IMR-90 (cell line): ENCODE measurements at regions of chr12 and their contacts with region 1.

Region 1: DNA sequence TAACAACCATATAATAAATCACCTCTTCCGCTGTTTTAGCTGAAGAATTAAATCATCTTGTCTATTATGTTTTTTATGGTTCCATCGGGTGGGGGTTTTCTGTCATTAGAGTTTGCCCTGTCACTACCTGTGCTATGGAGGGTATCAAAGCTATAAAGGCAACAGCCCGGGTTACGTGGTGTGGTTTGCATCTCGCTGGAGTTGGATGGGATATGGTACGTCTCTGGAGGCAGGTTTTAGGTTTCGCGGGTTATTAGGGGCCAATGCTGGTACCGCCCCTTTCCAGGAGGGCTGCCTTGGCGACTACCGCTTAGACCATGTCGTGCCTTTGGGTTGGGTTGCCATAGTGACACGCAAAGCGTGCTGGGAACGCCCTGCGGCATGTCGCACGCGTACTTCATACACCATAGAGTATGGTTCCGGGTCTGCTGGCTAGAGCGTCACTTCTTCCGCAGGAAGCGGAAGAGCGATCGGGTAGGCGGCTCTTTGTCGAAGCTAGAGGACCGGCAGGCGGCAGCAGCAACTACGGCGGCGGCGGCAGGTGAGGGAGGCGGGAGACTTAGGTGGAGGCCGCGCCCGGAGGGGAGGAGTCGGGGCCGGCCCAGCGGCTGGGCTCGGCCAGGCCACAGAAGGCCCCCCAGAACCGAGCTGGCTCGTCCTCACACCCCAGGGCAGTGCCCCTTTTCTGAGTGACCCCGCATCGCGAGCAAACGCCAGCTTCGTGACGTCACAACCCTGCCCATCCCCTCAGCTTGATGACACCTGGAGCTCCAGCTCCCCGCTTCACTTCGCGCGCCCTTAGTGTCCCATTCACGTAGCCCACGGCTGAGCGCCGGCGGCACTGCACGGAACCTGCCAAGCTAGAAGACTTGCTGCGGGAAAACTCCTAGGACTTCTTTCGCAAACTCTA is at the start of gene ZC3H10:
- DNase-seq: peak; percentile 100
- ATAC-seq: peak; percentile 76
- H3K4me3 ChIP-seq: peak within 1 kb of the TSS; percentile 85
- H3K27ac ChIP-seq: peak within 1 kb of the TSS; percentile 95
- H3K4me1 ChIP-seq: peaks cover 7% of the 10 kb centered on the region
- H3K27me3 ChIP-seq: no peaks in the 10 kb centered on the region
- CTCF ChIP-seq: peak; percentile 58
- POLR2A ChIP-seq: peak; percentile 97
- RAD21 ChIP-seq: no peak
- total RNA-seq, gene ZC3H10: 3.3 and 3.6 TPM in 2 replicates

Region 2: GRCh38 chr12:56029666-56030293 is 88.3 kb before region 1 on chr12:
- CTCF ChIA-PET with region 1: no interaction called
- POLR2A ChIA-PET with region 1: no interaction called
- dilution Hi-C with region 1: no loop called
- in situ Hi-C with region 1: no loop called
- intact Hi-C with region 1: no loop called
- DNase-seq: peak; percentile 67
- ATAC-seq: peak; percentile 96
- H3K4me3 ChIP-seq: no peak overlapping the region
- H3K27ac ChIP-seq: no peak overlapping the region
- H3K4me1 ChIP-seq: peaks cover 2% of the 10 kb centered on the region; the same call in 1 of the 2 replicates
- H3K27me3 ChIP-seq: no peaks in the 10 kb centered on the region
- CTCF ChIP-seq: peak; percentile 80
- POLR2A ChIP-seq: no peak
- RAD21 ChIP-seq: peak; percentile 72

Region 3: GRCh38 chr12:56104109-56104814 is 13.8 kb before region 1 on chr12 and contains the start of gene PA2G4:
- CTCF ChIA-PET with region 1: no interaction called
- POLR2A ChIA-PET with region 1: interaction called, 14 read pairs
- dilution Hi-C with region 1: no loop called
- in situ Hi-C with region 1: no loop called
- intact Hi-C with region 1: no loop called
- DNase-seq: peak; percentile 98
- ATAC-seq: peak; percentile 97
- H3K4me3 ChIP-seq: peak within 1 kb of the TSS; percentile 88
- H3K27ac ChIP-seq: peak within 1 kb of the TSS; percentile 94
- H3K4me1 ChIP-seq: peaks cover 5% of the 10 kb centered on the region; the same call in 1 of the 2 replicates
- H3K27me3 ChIP-seq: no peaks in the 10 kb centered on the region
- CTCF ChIP-seq: no peak
- POLR2A ChIP-seq: peak; percentile 70
- RAD21 ChIP-seq: no peak; the same call in 1 of the 2 replicates
- total RNA-seq, gene PA2G4: 198 and 251 TPM in 2 replicates

Region 4: DNA sequence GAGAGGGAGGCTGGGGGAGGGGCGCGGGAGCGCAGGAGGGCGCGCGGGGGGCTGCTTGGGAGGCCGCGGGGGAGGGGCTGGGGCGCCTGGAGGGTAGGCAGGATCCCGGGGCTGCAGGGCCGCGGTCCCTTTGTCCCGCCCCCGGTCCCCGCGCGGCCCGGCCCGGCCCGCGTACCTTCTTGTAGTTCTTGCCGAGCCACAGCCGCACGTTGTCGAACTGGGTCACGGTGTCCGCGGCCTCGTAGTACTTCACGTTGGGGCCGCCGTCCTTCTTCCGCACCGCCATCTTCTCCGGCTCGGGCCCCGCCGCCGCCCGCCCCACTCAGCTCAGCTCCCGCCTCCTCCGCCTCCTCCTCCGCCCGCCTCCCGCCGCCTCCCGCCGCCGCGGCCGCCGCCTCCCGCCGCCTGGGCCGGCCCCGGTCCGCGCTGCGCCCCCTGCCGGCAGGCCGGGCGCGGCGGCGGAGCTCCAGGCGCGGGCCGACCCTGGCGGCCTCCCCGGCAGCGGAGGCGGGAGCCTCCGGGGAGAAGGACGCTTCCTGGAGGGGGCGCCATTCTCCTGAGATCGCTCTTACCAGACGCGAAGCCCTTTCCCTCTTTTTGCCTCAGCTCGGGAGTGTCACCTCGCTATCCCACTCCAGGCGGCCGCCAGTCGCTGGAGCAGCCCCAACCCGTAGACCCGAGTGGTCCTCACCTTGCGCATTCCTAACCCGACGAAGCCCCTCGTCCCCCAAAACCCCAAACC is 71.3 kb after region 1 on chr12 and contains the start of gene SMARCC2:
- CTCF ChIA-PET with region 1: interaction called, 27 read pairs
- POLR2A ChIA-PET with region 1: interaction called, 3 read pairs
- dilution Hi-C with region 1: no loop called
- in situ Hi-C with region 1: no loop called
- intact Hi-C with region 1: loop called (anchors 1 kb)
- DNase-seq: peak; percentile 85
- ATAC-seq: peak; percentile 86
- H3K4me3 ChIP-seq: peak within 1 kb of the TSS; percentile 95
- H3K27ac ChIP-seq: peak within 1 kb of the TSS; percentile 93
- H3K4me1 ChIP-seq: peaks cover 7% of the 10 kb centered on the region
- H3K27me3 ChIP-seq: no peaks in the 10 kb centered on the region
- CTCF ChIP-seq: peak; percentile 97
- POLR2A ChIP-seq: no peak
- RAD21 ChIP-seq: peak; percentile 65
- total RNA-seq, gene SMARCC2: 41.4 and 42.3 TPM in 2 replicates

Region 5: DNA sequence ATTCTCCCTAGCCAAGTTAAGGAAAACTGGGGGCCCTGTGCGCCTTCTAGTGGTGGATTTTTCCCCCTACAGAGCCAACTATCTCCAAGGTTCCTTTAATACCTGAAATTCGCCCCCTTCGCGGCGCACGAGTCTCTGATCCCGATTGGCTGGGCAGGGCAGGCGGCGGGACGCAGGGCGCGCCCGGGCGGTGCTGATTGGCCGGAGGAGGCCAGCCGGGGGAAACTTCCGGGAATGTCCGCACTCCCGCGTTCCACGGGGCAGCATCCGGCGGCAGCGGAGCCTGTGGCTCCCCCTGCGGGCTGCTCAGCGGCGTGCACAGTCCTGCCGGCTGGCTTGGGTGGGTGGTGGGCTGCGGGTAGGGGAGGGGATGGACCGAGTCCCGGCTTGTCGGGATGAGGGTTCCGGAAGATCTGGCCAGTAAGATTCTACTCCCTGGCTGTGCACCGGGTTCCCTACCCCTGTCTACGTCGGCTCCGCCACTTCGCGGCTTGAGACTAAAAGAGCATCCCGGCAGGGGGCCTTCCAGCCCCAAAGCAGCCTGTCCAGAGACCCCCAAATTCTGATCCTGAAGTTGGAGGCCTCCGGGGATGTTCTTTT is 106.2 kb after region 1 on chr12 and contains the start of gene NABP2:
- CTCF ChIA-PET with region 1: interaction called, 3 read pairs
- POLR2A ChIA-PET with region 1: no interaction called
- dilution Hi-C with region 1: no loop called
- in situ Hi-C with region 1: no loop called
- intact Hi-C with region 1: loop called (anchors 1 kb)
- DNase-seq: peak; percentile 96
- ATAC-seq: peak; percentile 76
- H3K4me3 ChIP-seq: peak within 1 kb of the TSS; percentile 63
- H3K27ac ChIP-seq: peak within 1 kb of the TSS; percentile 73
- H3K4me1 ChIP-seq: peaks cover 4% of the 10 kb centered on the region; the same call in 1 of the 2 replicates
- H3K27me3 ChIP-seq: no peaks in the 10 kb centered on the region
- CTCF ChIP-seq: peak; percentile 74
- POLR2A ChIP-seq: no peak
- RAD21 ChIP-seq: no peak; the same call in none of the 2 replicates
- total RNA-seq, gene NABP2: 29.2 and 31.4 TPM in 2 replicates